AG04450 (cell line): ENCODE measurements at regions of chr10 and their contacts with region 1.

Region 1: DNA sequence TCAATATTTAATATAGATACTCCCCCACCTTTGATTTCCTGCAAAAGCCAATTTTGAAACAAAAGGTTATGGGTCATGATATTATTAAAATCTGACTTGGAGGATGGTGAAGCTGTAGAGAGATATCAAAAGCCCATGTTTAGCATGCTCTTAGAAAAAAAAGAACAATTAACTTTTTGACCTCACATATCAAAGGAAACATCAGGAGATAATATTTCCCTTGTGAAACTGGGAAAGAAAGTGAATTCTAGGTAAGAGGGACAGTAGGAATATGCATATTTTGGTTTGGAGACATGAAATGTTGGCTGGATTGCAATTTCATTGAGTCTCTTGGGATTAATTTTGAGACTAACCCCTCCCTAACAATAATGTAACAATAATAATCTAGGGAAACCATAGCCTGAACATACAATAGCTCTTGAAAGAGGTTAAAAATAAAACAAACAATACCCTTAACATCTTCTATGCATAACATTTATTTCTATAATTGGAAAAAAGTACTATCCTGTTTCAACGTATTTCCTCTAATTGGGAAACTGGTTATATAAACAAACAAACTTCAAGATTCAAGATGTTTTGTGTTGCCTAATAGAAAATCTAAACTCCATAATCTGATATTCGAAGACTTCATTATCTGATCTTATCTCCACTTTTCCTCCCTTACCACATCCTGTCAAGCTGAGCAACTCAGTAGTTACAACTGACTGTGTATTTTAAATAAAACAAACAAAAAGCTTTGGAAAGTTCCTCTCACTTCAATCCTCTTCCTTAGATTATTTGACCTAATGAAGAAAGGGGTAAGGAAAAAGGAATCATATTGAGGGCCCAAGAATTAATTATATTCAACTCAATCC is 14.8 kb downstream of the TMEM26 start:
- DNase-seq: no peak
- H3K4me3 ChIP-seq: no peak overlapping the region
- H3K27ac ChIP-seq: no peak overlapping the region
- H3K27me3 ChIP-seq: no peaks in the 10 kb centered on the region
- CTCF ChIP-seq: no peak

Region 2: GRCh38 chr10:60739581-60739980 is 698.8 kb before region 1 on chr10:
- CTCF ChIA-PET with region 1: no interaction called
- POLR2A ChIA-PET with region 1: no interaction called
- DNase-seq: no peak
- H3K4me3 ChIP-seq: no peak overlapping the region
- H3K27ac ChIP-seq: no peak overlapping the region
- H3K27me3 ChIP-seq: peaks cover 28% of the 10 kb centered on the region
- CTCF ChIP-seq: no peak

Region 3: GRCh38 chr10:61623161-61623560 is 184.8 kb after region 1 on chr10:
- CTCF ChIA-PET with region 1: no interaction called
- POLR2A ChIA-PET with region 1: interaction called, 10 read pairs
- DNase-seq: no peak
- H3K4me3 ChIP-seq: no peak overlapping the region
- H3K27ac ChIP-seq: no peak overlapping the region
- H3K27me3 ChIP-seq: no peaks in the 10 kb centered on the region
- CTCF ChIP-seq: no peak